ENCODE measurements at regions of chr17 and their contacts with region 1.

Region 1: GRCh38 chr17:79991140-79991923 is 44.3 kb downstream of the TBC1D16 start:
- DNase-seq: peak; percentile 88 to 97
- ATAC-seq: peak; percentile 69 to 90
- H3K4me3 ChIP-seq: peak overlapping the region; percentile 51
- H3K27ac ChIP-seq: peak overlapping the region; percentile 89 to 95
- H3K4me1 ChIP-seq: peaks cover 83% of the 10 kb centered on the region
- CTCF ChIP-seq: peak; percentile 88
- EP300 ChIP-seq: no peak; a peak in 1 of 5 replicates
- POLR2A ChIP-seq: no peak
- RAD21 ChIP-seq: peak; percentile 86 to 99

Region 2: DNA sequence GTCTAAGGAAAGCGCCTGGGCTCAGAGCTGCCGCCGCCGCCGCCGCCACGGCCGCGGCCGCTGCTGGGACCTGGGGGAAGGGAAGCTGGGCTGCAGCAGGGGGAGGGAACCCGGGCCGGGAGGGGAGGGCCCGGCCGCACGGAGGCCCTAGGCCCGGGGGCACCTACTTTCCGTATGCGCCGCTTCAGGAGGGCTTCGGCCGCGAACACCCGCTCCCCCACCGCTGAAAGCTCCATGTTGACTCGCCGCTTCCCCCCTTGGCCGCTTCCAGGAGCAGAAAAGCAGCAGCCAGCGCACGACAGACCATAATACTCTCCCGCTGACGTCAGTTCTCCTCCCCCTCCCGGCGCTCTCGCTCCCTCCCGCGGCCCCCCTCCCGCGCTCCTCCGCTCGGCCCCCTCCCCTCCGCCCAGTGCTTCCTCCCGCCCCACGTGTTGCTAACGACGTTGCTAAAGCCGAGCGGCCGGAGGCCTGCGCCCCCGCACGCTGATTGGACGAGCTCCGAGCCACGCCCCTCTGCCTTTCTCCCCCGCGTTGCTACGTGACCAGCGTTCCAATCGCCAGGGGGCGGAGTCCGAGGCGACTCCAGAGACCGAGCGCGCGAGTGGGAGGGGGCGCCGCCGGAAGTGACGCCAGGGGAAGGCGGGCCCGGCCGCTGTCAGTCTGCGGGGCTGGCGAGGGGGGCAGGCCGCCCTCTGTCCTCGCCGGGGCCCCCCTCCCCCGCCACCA is 194.4 kb before region 1 on chr17 and contains the start of gene CBX8:
- CTCF ChIA-PET with region 1: interaction called, 96 read pairs
- POLR2A ChIA-PET with region 1: interaction called, 12 read pairs
- DNase-seq: peak; percentile 98 to 100
- ATAC-seq: peak; percentile 65 to 75
- H3K4me3 ChIP-seq: peak within 1 kb of the TSS; percentile 73
- H3K27ac ChIP-seq: peak within 1 kb of the TSS; percentile 97 to 98
- H3K4me1 ChIP-seq: peaks cover 35% of the 10 kb centered on the region
- CTCF ChIP-seq: no peak
- EP300 ChIP-seq: peak in 1 of 2 experiments; percentile 28; a peak in 1 of 5 replicates
- POLR2A ChIP-seq: peak; percentile 74
- RAD21 ChIP-seq: no peak
- polyA plus RNA-seq, gene CBX8: 1.5 and 2.8 TPM in 2 replicates

Region 3: DNA sequence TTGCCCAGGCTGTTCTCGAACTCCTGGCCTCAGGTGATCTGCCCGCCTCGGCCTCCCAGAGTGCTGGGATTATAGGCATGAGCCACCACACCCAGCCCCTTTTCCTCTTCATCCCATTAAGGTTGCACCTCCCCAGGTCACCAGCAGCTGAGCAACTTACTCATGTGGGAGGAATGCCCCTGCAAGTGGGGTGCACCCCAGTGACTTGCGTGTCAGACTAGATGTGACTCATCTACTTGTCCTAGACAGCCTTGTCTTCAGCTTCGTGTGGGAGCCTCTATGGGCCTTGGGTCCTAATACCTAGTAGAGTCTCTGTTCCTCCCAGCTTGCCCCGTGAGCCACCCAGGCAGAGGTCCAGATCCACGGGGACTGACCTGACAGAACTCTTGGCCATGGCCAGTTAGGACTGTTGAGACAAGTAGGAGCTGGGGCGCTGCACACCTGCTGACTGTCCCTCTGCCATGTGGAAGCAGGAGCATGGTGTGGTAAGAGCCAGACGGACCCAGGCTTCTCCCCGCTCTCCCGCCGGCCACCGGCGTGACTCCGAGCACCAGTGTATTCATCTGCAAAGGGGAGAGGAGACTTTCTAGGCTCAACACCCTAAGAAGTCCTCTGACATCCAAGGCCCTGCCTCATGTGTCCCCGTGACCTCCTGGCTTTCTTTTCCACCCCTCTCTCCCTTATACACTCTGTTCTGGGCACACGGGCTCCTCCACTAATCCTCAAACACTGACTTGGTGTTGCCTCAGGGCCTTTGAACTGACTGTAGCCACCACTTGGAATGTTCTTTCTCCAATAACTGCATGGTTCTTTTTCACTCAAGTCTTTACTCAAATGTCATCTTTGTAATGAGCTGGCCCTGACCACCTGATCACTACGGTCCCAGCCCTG is 140.5 kb before region 1 on chr17:
- CTCF ChIA-PET with region 1: interaction called, 24 read pairs
- POLR2A ChIA-PET with region 1: no interaction called
- DNase-seq: peak; percentile 90 to 99
- ATAC-seq: peak; percentile 78 to 87
- H3K4me3 ChIP-seq: no peak overlapping the region
- H3K27ac ChIP-seq: peak overlapping the region; percentile 71 to 83
- H3K4me1 ChIP-seq: peaks cover 36% of the 10 kb centered on the region
- CTCF ChIP-seq: no peak
- EP300 ChIP-seq: no peak; a peak in 1 of 5 replicates
- POLR2A ChIP-seq: no peak
- RAD21 ChIP-seq: peak; percentile 13 to 17; a peak in 1 of 5 replicates

Region 4: DNA sequence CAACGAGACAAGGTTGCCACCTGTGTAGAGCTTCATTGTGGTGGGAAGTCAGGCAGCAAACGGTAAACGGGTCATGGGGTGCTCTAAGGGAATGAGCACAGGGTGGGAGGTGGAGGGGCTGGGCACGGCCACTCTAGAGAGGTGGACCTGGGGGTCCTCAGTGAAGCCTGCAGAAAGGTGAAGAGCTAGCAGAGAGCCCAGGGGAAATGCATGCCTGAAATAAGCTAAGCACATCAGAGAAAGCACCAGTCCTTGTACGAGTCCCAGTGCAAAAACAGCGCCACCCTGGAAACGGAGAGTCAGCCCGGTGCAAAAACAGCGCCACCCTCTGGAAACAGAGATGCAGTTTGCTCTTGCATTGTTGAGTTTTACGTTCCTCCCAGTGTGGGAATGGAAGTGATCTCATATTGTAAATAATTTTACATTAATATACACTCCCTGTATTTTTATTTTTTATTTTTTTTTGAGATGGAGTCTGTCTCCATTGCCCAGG is 20.7 kb before region 1 on chr17:
- CTCF ChIA-PET with region 1: interaction called, 40 read pairs
- POLR2A ChIA-PET with region 1: no interaction called
- DNase-seq: peak in 1 of 2 experiments; percentile 75
- ATAC-seq: peak in 1 of 2 experiments; percentile 64; a peak in 3 of 6 replicates
- H3K4me3 ChIP-seq: no peak overlapping the region
- H3K27ac ChIP-seq: no peak overlapping the region
- H3K4me1 ChIP-seq: no peaks in the 10 kb centered on the region
- CTCF ChIP-seq: peak; percentile 63
- EP300 ChIP-seq: no peak
- POLR2A ChIP-seq: no peak
- RAD21 ChIP-seq: peak; percentile 57 to 68

Region 5: GRCh38 chr17:79977708-79978547 is 13.4 kb before region 1 on chr17:
- CTCF ChIA-PET with region 1: interaction called, 40 read pairs
- POLR2A ChIA-PET with region 1: interaction called, 3 read pairs
- DNase-seq: no peak
- ATAC-seq: no peak
- H3K4me3 ChIP-seq: no peak overlapping the region
- H3K27ac ChIP-seq: no peak overlapping the region
- H3K4me1 ChIP-seq: no peaks in the 10 kb centered on the region
- CTCF ChIP-seq: no peak
- EP300 ChIP-seq: no peak
- POLR2A ChIP-seq: no peak
- RAD21 ChIP-seq: no peak

Measured in A549 (cell line).